ENCODE measurements at regions of chr1 and their contacts with region 1.

Region 1: GRCh38 chr1:19209990-19210771 is at the start of gene UBR4:
- DNase-seq: peak; percentile 91
- H3K4me3 Mint-ChIP-seq: peak within 1 kb of the TSS; percentile 81
- H3K27ac Mint-ChIP-seq: peak within 1 kb of the TSS; percentile 81
- H3K4me1 Mint-ChIP-seq: peaks cover 22% of the 10 kb centered on the region
- H3K27me3 Mint-ChIP-seq: no peaks in the 10 kb centered on the region
- CTCF ChIP-seq: no peak
- total RNA-seq, gene UBR4: 123 and 134 TPM in 2 replicates

Region 2: DNA sequence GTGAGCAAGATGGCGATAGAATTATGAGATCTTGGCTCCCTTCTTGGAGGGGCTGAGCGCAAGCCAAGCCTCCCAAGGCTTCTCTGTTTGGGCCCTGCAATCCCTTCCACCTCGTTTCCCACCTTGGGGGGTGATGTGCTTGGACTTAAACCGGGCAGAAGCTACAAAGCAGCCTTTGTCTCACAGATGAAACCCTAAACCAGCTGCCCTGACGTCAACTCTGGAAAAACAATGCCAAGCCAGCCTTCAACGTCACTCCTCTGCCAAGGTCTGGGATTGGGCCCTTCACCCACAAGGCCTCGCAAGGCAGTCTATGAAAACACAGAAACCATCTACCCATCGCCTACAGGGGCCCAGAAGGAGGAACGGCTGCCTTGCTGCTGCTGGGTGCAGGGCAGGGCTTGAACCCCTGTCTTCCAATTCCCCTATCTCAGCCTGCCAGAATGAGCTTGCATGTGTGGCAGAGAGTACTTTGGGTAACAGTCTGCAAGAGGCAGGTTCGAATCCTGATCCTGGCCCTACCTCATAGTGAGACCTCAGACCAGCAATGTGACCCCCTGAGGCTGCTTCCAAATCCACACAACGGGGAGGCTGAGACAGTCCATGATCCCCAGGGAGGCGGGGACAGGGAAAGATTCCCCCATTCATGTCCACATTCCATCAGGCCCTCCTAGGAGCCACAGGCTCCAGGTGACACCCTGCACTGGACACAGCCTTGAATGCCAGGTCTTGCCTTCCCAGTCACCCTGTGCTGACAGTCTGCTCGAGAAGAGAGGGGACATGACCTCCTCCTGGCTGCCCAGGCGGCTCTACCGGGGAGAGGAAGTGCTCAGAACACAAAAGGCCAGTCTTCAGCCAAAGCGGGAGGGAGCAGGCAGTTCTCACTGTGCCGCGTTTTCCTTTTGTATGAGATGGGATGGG is 268.7 kb before region 1 on chr1:
- CTCF ChIA-PET with region 1: interaction called, 14 read pairs
- intact Hi-C with region 1: no loop called
- DNase-seq: peak; percentile 66
- H3K4me3 Mint-ChIP-seq: no peak overlapping the region
- H3K27ac Mint-ChIP-seq: peak overlapping the region; percentile 42
- H3K4me1 Mint-ChIP-seq: peaks cover 37% of the 10 kb centered on the region
- H3K27me3 Mint-ChIP-seq: no peaks in the 10 kb centered on the region
- CTCF ChIP-seq: no peak

Measured in Calu3 (cell line).